MCF 10A (cell line): ENCODE measurements at regions of chr1 and their contacts with region 1.

Region 1: DNA sequence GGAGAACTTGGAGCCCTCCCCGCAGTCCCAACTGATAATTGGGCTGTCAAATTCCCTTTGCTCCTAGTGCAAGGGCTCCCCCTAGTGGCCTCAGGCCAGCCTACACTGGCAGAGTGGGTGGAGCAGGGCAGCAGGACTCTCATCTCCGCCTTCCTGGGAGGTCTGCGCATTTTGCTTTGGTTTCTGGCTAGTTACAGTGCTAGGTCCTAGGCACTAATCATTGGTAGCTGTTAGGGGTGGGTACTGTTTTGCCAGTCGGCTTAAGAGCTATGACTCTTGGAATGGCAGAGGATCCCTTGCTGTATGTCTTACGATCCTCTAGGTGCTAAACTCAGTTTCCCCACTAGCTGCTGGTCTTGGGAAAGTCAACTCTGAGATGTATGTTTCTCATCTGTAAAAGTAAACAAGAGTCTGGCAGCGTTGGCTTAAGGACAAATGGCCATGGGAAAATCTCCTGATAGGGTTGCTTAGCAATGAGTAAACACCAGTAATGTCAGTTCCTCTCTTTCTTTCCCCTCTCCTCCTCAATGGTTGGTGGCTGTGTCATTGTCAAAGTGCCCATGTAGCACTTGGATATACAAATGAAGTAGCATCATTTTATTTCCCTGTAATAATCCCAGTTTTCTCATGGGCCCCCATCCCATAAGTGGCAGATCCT is 2.1 kb upstream of the FYB2 start:
- DNase-seq: peak; percentile 78
- H3K4me3 Mint-ChIP-seq: no peak overlapping the region
- H3K27ac Mint-ChIP-seq: no peak overlapping the region
- H3K4me1 Mint-ChIP-seq: peaks cover 8% of the 10 kb centered on the region
- H3K27me3 Mint-ChIP-seq: peaks cover 11% of the 10 kb centered on the region
- CTCF ChIP-seq: peak; percentile 95

Region 2: GRCh38 chr1:56631901-56632300 is 189.4 kb before region 1 on chr1:
- CTCF ChIA-PET with region 1: no interaction called
- POLR2A ChIA-PET with region 1: no interaction called
- intact Hi-C with region 1: no loop called
- DNase-seq: no peak
- H3K4me3 Mint-ChIP-seq: no peak overlapping the region
- H3K27ac Mint-ChIP-seq: no peak overlapping the region
- H3K4me1 Mint-ChIP-seq: no peaks in the 10 kb centered on the region
- H3K27me3 Mint-ChIP-seq: no peaks in the 10 kb centered on the region
- CTCF ChIP-seq: no peak

Region 3: GRCh38 chr1:56709269-56709880 is 111.9 kb before region 1 on chr1:
- CTCF ChIA-PET with region 1: interaction called, 9 read pairs
- POLR2A ChIA-PET with region 1: no interaction called
- intact Hi-C with region 1: loop called (anchors 1 kb)
- DNase-seq: peak; percentile 69
- H3K4me3 Mint-ChIP-seq: no peak overlapping the region
- H3K27ac Mint-ChIP-seq: no peak overlapping the region
- H3K4me1 Mint-ChIP-seq: peaks cover 6% of the 10 kb centered on the region
- H3K27me3 Mint-ChIP-seq: no peaks in the 10 kb centered on the region
- CTCF ChIP-seq: peak; percentile 66

Region 4: GRCh38 chr1:56758135-56758534 is 63.1 kb before region 1 on chr1:
- CTCF ChIA-PET with region 1: interaction called, 24 read pairs
- POLR2A ChIA-PET with region 1: no interaction called
- intact Hi-C with region 1: loop called (anchors 1 kb)
- DNase-seq: peak; percentile 61
- H3K4me3 Mint-ChIP-seq: no peak overlapping the region
- H3K27ac Mint-ChIP-seq: no peak overlapping the region
- H3K4me1 Mint-ChIP-seq: no peaks in the 10 kb centered on the region
- H3K27me3 Mint-ChIP-seq: peaks cover 15% of the 10 kb centered on the region
- CTCF ChIP-seq: no peak

Region 5: GRCh38 chr1:56790036-56790435 is 31.2 kb before region 1 on chr1:
- CTCF ChIA-PET with region 1: interaction called, 23 read pairs
- POLR2A ChIA-PET with region 1: interaction called, 3 read pairs
- intact Hi-C with region 1: no loop called
- DNase-seq: no peak
- H3K4me3 Mint-ChIP-seq: no peak overlapping the region
- H3K27ac Mint-ChIP-seq: no peak overlapping the region
- H3K4me1 Mint-ChIP-seq: no peaks in the 10 kb centered on the region
- H3K27me3 Mint-ChIP-seq: no peaks in the 10 kb centered on the region
- CTCF ChIP-seq: no peak

Region 6: GRCh38 chr1:56798053-56798471 is 23.2 kb before region 1 on chr1:
- CTCF ChIA-PET with region 1: interaction called, 23 read pairs
- POLR2A ChIA-PET with region 1: interaction called, 3 read pairs
- intact Hi-C with region 1: no loop called
- DNase-seq: peak; percentile 32
- H3K4me3 Mint-ChIP-seq: no peak overlapping the region
- H3K27ac Mint-ChIP-seq: no peak overlapping the region
- H3K4me1 Mint-ChIP-seq: peaks cover 19% of the 10 kb centered on the region
- H3K27me3 Mint-ChIP-seq: no peaks in the 10 kb centered on the region
- CTCF ChIP-seq: no peak

Region 7: DNA sequence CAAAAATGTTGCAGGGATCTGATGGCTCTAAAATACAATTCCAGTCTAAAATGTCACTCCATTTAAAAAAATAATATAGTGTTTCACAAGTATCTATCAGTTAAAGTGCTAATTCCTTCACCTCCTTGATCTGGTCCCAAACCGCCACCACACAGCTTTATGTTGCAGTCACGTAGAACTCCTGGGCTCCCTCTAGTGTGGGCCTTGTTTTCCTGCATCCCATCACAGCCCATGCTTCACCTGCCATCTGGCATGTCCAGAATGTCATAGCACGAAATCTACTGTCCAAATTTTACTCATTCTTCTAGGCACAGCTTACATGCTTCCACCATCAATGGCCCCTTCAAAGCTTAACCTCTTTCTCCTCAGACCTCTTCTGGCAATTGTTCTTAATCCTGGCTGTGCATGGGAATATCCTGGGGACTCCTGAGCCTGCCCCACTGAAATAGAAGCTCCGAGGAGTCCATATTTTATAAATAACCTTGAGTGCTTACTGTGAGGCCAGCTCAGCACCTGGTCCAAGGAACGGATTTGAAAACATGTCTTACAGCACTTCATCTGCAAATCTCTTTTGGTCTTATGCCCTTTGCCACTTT is 17.6 kb before region 1 on chr1:
- CTCF ChIA-PET with region 1: interaction called, 20 read pairs
- POLR2A ChIA-PET with region 1: interaction called, 4 read pairs
- intact Hi-C with region 1: no loop called
- DNase-seq: peak; percentile 68
- H3K4me3 Mint-ChIP-seq: no peak overlapping the region
- H3K27ac Mint-ChIP-seq: no peak overlapping the region
- H3K4me1 Mint-ChIP-seq: no peaks in the 10 kb centered on the region
- H3K27me3 Mint-ChIP-seq: no peaks in the 10 kb centered on the region
- CTCF ChIP-seq: peak; percentile 63

Region 8: DNA sequence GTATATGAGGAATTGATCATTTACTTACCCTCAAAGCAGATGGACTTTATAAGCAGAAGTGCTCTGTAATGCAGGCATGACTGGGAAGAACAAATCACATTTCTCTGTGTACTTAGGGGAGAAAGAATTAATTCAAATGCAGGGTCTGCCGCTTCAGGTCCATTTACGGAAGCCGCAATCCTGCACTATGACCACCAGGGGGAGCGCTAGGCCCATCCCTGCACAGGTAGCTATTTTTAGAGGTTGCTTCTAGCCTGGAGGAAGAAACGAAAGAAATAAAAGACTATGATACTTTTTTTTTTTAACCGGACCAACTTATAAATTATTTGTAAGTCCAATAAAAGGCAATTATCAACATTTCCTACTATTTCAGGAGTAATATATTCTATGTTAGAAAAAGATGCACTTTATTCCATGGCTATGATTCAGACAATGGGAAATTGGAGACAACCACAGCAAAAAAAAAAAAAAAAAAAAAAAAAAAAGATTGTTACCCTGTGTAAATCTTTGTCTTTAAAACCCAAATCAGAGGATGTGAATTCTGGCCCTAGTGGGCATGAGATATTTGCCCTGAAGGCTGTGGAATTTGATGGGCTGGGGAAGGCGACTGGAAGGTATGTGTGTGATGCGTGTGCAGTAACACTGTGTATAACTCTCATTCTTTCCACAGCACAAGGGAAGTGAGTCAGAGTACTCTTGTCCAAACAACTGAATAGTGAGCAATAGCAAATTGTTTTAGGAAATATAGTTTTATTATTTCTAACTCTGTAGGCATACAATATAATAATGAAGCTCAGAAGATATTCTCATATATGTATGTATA is 10.8 kb after region 1 on chr1:
- CTCF ChIA-PET with region 1: interaction called, 39 read pairs
- POLR2A ChIA-PET with region 1: no interaction called
- intact Hi-C with region 1: no loop called
- DNase-seq: peak; percentile 82
- H3K4me3 Mint-ChIP-seq: peak overlapping the region; percentile 50
- H3K27ac Mint-ChIP-seq: no peak overlapping the region
- H3K4me1 Mint-ChIP-seq: peaks cover 16% of the 10 kb centered on the region
- H3K27me3 Mint-ChIP-seq: peaks cover 20% of the 10 kb centered on the region
- CTCF ChIP-seq: peak; percentile 93